ENCODE measurements at regions of chr14 and their contacts with region 1.

Region 1: GRCh38 chr14:103239751-103240150 is 94.3 kb upstream of the EIF5 start:
- DNase-seq: no peak
- H3K4me3 ChIP-seq: no peak overlapping the region
- H3K27ac ChIP-seq: no peak overlapping the region
- H3K4me1 ChIP-seq: peaks cover 6% of the 10 kb centered on the region
- H3K27me3 ChIP-seq: no peaks in the 10 kb centered on the region
- CTCF ChIP-seq: no peak

Region 2: GRCh38 chr14:103185051-103185992 is 54.4 kb before region 1 on chr14:
- CTCF ChIA-PET with region 1: no interaction called
- dilution Hi-C with region 1: no loop called
- in situ Hi-C with region 1: no loop called
- intact Hi-C with region 1: no loop called
- DNase-seq: peak; percentile 82
- H3K4me3 ChIP-seq: no peak overlapping the region
- H3K27ac ChIP-seq: peak overlapping the region; percentile 36
- H3K4me1 ChIP-seq: peaks cover 11% of the 10 kb centered on the region
- H3K27me3 ChIP-seq: peaks cover 3% of the 10 kb centered on the region
- CTCF ChIP-seq: peak; percentile 54 to 63

Region 3: DNA sequence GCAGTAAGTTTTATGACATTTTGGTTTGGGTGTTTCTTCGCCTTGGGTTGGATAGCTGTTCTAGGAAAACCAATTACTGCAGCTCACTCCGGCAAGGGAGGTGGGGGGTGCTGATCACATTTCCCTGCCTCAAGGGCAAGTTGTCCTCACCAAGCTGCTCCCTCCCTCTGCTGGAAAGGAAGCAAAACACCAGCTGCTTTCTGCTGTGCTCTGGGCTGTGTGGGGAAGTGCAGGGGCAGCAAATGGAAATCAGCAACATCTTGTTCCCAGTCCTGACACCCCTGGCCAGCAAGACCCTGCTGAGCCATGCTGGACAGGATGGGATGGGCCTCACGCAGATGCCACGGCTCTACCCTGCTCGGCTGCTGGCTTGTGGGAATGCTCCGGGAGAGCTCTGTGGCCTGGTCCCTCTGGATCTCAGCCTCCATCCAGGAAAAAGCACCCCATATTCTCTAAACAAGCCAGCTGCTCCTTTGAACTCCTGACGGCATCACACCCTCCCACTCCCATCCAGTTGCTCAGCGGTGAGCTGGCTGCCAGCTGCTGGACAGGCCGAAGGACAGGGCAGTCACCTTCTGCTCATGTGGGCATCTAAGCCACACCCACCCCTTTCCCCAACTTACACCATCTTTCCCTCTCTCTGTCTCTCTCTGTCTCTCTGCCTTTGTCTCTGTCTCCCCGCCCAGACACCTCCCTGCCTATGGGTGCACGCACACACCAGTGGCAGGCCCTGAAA is 41.9 kb after region 1 on chr14:
- CTCF ChIA-PET with region 1: no interaction called
- dilution Hi-C with region 1: loop called (anchors 5 kb)
- in situ Hi-C with region 1: no loop called
- intact Hi-C with region 1: no loop called
- DNase-seq: peak; percentile 24
- H3K4me3 ChIP-seq: no peak overlapping the region
- H3K27ac ChIP-seq: no peak overlapping the region
- H3K4me1 ChIP-seq: peaks cover 5% of the 10 kb centered on the region
- H3K27me3 ChIP-seq: peaks cover 15% of the 10 kb centered on the region
- CTCF ChIP-seq: peak in 1 of 2 donors; percentile 51

Region 4: DNA sequence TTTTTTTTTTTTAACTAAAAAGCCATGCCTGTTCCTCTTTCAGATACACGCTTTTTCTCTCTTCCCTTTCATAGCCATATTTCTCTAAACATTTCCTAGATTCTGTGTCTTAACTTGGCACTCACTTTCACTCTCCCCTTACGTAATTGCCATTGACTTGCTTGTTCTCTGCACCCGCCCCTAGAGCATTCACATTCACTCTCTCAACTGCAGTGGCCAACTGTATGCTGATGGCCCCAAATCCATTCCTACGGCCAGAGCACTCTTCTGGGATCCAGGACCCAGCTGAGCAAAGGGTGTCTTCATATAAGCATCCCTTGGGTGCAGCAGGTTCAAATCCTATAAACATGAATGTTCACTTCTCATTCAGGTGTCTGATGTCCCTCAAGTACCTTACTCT is 223.4 kb after region 1 on chr14:
- CTCF ChIA-PET with region 1: no interaction called
- dilution Hi-C with region 1: no loop called
- in situ Hi-C with region 1: no loop called
- intact Hi-C with region 1: no loop called
- DNase-seq: no peak
- H3K4me3 ChIP-seq: no peak overlapping the region
- H3K27ac ChIP-seq: no peak overlapping the region
- H3K4me1 ChIP-seq: no peaks in the 10 kb centered on the region
- H3K27me3 ChIP-seq: no peaks in the 10 kb centered on the region
- CTCF ChIP-seq: no peak